ENCODE measurements at regions of chr1 and their contacts with region 1.

Region 1: GRCh38 chr1:166975361-166976129 is at the start of gene ILDR2:
- DNase-seq: peak; percentile 87
- ATAC-seq: peak; percentile 60
- H3K4me3 Mint-ChIP-seq: peak within 1 kb of the TSS; percentile 93
- H3K27ac Mint-ChIP-seq: peak within 1 kb of the TSS; percentile 99
- H3K4me1 Mint-ChIP-seq: peaks cover 51% of the 10 kb centered on the region
- H3K27me3 Mint-ChIP-seq: peaks cover 21% of the 10 kb centered on the region
- total RNA-seq, gene ILDR2: 9.1 to 14.6 TPM

Region 2: DNA sequence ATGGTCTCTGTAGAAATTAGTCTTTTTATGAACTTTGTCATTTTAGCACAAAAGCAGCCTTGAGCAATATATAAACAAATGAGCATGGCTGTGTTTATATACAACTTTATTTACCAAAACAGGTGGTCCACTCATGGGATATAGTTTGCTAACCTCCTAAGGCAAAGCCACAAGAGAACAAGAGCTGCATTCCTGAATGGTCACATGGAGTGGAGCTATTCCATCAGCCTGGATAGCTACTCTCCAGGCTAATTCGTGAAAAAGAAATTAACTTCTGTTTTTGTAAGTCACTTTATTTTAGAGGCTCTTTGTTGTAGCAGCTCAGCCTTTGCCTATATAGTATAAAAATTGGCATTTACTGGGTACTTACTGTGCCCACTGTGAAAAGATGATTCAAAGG is 645.4 kb before region 1 on chr1:
- CTCF ChIA-PET with region 1: no interaction called
- POLR2A ChIA-PET with region 1: no interaction called
- intact Hi-C with region 1: no loop called
- DNase-seq: no peak
- ATAC-seq: no peak
- H3K4me3 Mint-ChIP-seq: no peak overlapping the region
- H3K27ac Mint-ChIP-seq: no peak overlapping the region
- H3K4me1 Mint-ChIP-seq: no peaks in the 10 kb centered on the region
- H3K27me3 Mint-ChIP-seq: peaks cover 7% of the 10 kb centered on the region

Region 3: GRCh38 chr1:166544561-166544960 is 431.0 kb before region 1 on chr1:
- CTCF ChIA-PET with region 1: no interaction called
- POLR2A ChIA-PET with region 1: no interaction called
- intact Hi-C with region 1: no loop called
- DNase-seq: no peak
- ATAC-seq: no peak
- H3K4me3 Mint-ChIP-seq: no peak overlapping the region
- H3K27ac Mint-ChIP-seq: no peak overlapping the region
- H3K4me1 Mint-ChIP-seq: no peaks in the 10 kb centered on the region
- H3K27me3 Mint-ChIP-seq: peaks cover 5% of the 10 kb centered on the region

Region 4: DNA sequence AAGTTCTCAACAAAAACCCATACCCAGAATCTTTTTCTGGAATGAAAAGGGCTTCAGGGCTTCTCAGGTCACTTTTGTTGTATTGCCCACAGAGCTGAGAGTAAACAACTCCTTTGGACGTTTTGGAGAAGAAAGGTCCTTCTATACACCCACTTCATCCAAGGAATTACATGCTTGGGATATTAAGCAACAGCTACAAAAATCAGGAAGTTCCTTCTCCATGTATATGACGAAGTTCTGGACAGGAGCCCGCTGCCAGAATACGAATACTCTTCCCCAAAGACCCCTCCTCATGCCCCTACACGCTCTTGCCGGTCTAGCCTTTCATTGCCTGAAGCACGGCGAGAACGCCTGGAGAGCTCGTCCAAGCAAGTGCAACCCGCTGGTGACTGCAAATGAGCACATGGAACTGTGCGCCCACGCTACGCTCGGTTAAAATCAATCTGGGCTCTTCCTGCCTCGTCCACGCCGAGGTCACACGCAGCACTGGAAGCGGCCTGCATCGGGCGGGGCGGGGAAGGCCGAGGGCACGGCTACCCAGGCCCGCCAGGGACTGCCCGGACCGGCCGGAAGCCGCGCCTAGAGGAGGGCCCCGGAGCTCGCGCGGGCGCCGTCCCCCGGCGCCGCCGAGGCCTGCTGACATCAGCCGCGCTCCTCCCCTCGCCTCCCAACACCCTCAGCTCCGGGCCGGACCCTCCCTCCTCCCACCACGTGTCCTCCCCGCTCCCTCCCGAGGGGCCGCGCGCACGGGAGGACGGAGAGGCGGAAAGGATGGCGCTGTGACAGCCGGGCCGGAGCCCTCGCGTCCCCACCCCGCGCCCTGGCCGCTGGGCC is 136.6 kb before region 1 on chr1 and contains the start of gene POGK:
- CTCF ChIA-PET with region 1: no interaction called
- POLR2A ChIA-PET with region 1: no interaction called
- intact Hi-C with region 1: loop called in 1 of 2 experiments (anchors 1 kb)
- DNase-seq: peak; percentile 93
- ATAC-seq: peak; percentile 97
- H3K4me3 Mint-ChIP-seq: peak within 1 kb of the TSS; percentile 90
- H3K27ac Mint-ChIP-seq: peak within 1 kb of the TSS; percentile 98
- H3K4me1 Mint-ChIP-seq: peaks cover 56% of the 10 kb centered on the region
- H3K27me3 Mint-ChIP-seq: no peaks in the 10 kb centered on the region
- total RNA-seq, gene POGK: 36.2 to 40.6 TPM

Region 5: GRCh38 chr1:166875734-166876539 is 99.6 kb before region 1 on chr1 and contains the start of gene TADA1:
- CTCF ChIA-PET with region 1: no interaction called
- POLR2A ChIA-PET with region 1: no interaction called
- intact Hi-C with region 1: loop called in 1 of 2 experiments (anchors 2 kb)
- DNase-seq: peak; percentile 100
- ATAC-seq: peak; percentile 91
- H3K4me3 Mint-ChIP-seq: peak within 1 kb of the TSS; percentile 92
- H3K27ac Mint-ChIP-seq: peak within 1 kb of the TSS; percentile 97
- H3K4me1 Mint-ChIP-seq: peaks cover 45% of the 10 kb centered on the region
- H3K27me3 Mint-ChIP-seq: no peaks in the 10 kb centered on the region
- total RNA-seq, gene TADA1: 16.0 to 19.5 TPM

Region 6: DNA sequence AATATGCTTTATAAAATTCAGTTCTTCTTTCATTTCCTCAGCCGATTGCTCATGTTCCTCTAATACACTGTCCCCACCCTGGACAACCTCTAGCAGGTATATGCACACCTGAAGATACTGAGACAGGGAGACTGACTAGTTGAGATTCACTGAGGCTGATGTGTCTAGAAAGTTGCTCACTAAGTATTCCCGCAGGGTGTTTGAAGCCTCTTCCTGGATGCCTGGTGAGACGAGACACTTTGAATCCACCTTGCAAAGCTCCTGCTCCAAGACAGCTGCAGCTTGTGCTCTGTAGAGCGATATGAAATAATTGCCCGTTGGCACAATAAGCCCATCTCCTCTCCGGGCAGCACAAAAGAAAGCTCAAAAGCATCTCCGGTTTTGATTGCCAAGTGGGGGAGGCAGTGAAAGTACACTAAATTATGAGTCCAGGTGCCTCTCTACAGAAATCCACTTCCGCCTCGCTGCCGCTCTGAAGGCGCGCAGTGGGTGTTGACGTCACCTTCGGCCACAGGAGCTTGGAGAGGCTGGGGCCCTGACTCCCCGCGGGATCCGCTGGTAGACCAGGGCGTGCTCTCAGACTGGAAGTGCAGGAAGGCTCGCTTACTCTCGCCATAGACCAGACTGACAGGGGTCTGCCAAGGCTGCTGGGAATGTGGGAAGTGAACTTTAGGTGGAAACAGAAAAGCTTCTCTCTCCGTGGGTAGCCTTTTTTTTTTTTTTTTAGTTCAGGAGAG is 68.4 kb after region 1 on chr1:
- CTCF ChIA-PET with region 1: no interaction called
- POLR2A ChIA-PET with region 1: no interaction called
- intact Hi-C with region 1: loop called (anchors 2 to 5 kb)
- DNase-seq: peak; percentile 89
- ATAC-seq: peak; percentile 99
- H3K4me3 Mint-ChIP-seq: peak overlapping the region; percentile 72
- H3K27ac Mint-ChIP-seq: peak overlapping the region; percentile 83
- H3K4me1 Mint-ChIP-seq: peaks cover 18% of the 10 kb centered on the region
- H3K27me3 Mint-ChIP-seq: peaks cover 7% of the 10 kb centered on the region

Region 7: DNA sequence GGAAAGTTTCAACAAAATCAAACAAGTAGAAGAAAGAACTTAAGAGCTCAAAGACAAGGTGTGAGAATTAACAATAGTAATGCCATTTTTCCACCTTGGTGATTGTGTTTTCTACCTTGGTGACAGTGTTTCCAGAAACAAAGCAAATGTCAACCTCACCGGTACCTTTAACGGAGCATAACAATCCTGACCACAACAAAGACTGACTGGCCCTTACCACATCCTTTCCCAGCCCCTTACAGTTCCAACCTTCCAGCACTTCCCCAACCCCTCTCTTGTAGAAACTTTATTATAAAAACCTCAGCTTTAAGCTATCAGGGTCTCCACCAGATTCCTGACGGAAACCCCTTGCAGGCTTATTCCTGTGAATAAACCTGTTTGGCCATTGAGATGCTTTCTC is 135.0 kb after region 1 on chr1:
- CTCF ChIA-PET with region 1: no interaction called
- POLR2A ChIA-PET with region 1: no interaction called
- intact Hi-C with region 1: loop called in 1 of 2 experiments (anchors 10 kb)
- DNase-seq: peak; percentile 32
- ATAC-seq: peak; percentile 68
- H3K4me3 Mint-ChIP-seq: no peak overlapping the region
- H3K27ac Mint-ChIP-seq: no peak overlapping the region
- H3K4me1 Mint-ChIP-seq: peaks cover 38% of the 10 kb centered on the region
- H3K27me3 Mint-ChIP-seq: no peaks in the 10 kb centered on the region

Region 8: GRCh38 chr1:167121375-167122120 is 146.0 kb after region 1 on chr1:
- CTCF ChIA-PET with region 1: no interaction called
- POLR2A ChIA-PET with region 1: no interaction called
- intact Hi-C with region 1: loop called (anchors 5 to 10 kb)
- DNase-seq: peak; percentile 56
- ATAC-seq: peak; percentile 64
- H3K4me3 Mint-ChIP-seq: peak overlapping the region; percentile 65
- H3K27ac Mint-ChIP-seq: peak overlapping the region; percentile 66
- H3K4me1 Mint-ChIP-seq: no peaks in the 10 kb centered on the region
- H3K27me3 Mint-ChIP-seq: no peaks in the 10 kb centered on the region

Region 9: DNA sequence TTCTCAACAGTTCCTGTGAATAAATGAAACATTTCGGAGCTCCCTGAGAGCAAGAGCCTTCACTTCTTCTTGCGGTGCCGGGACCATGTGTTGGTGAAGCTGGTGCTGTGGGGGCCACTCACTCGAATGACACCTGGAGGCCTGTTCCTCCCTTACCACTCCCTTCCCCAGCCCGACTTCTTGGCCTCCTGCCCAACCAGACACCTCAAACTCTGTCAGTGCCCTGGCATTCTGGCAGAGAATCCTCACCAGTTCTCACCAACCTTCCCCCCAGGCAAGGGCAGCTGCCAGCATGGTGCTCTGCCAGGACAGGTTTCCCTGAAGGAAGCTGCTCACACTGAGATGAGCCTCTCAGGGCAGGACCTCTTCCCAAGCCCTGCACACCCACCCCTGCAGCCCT is 814.6 kb after region 1 on chr1:
- CTCF ChIA-PET with region 1: no interaction called
- POLR2A ChIA-PET with region 1: no interaction called
- intact Hi-C with region 1: no loop called
- DNase-seq: no peak
- ATAC-seq: no peak
- H3K4me3 Mint-ChIP-seq: no peak overlapping the region
- H3K27ac Mint-ChIP-seq: no peak overlapping the region
- H3K4me1 Mint-ChIP-seq: peaks cover 11% of the 10 kb centered on the region
- H3K27me3 Mint-ChIP-seq: no peaks in the 10 kb centered on the region

Measured in activated CD4-positive, alpha-beta T cell treated with anti-CD3 and anti-CD28 coated beads for 36 hours (primary cell).